ENCODE measurements at regions of chr16 and their contacts with region 1.

Region 1: DNA sequence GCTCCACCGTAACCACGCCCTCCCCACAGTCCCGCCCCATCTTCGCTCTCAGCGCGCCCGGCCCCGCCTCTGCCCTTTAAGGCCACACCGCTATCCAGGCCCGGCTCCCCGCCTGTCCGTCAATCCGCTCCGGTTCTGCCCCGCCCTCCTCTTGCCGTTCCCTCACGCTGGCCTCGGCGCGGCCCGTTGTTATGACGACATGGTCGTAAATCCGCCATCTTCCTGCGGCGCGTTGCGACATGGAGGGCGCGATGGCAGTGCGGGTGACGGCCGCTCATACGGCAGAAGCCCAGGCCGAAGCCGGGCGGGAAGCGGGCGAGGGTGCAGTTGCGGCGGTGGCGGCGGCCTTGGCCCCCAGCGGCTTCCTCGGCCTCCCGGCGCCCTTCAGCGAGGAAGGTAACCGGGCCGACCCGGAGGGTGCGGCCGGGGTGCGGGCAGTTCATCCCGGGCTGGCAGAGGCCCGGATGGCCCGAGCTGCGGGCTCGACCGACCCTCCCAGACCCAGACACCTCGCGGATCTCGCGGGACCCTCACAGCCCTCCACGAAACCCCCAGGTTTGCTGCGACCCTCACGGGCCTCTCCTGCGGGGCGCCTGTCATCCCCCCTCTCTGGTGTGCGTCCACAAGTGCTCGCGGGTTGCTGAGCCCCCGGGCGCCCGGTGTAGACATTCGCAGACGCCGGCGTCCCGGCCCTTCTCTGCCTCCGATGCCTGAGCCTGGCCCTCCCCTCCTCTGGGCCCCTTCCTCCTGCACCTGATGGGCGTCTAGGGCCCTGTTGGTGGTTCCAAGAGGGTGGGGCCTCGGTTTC is at the start of gene E4F1:
- DNase-seq: peak; percentile 100
- ATAC-seq: peak; percentile 99
- H3K4me3 Mint-ChIP-seq: peak within 1 kb of the TSS; percentile 78
- H3K27ac Mint-ChIP-seq: peak within 1 kb of the TSS; percentile 13
- H3K4me1 Mint-ChIP-seq: peaks cover 15% of the 10 kb centered on the region
- H3K27me3 Mint-ChIP-seq: no peaks in the 10 kb centered on the region
- total RNA-seq, gene E4F1: 18.0 to 18.6 TPM

Region 2: DNA sequence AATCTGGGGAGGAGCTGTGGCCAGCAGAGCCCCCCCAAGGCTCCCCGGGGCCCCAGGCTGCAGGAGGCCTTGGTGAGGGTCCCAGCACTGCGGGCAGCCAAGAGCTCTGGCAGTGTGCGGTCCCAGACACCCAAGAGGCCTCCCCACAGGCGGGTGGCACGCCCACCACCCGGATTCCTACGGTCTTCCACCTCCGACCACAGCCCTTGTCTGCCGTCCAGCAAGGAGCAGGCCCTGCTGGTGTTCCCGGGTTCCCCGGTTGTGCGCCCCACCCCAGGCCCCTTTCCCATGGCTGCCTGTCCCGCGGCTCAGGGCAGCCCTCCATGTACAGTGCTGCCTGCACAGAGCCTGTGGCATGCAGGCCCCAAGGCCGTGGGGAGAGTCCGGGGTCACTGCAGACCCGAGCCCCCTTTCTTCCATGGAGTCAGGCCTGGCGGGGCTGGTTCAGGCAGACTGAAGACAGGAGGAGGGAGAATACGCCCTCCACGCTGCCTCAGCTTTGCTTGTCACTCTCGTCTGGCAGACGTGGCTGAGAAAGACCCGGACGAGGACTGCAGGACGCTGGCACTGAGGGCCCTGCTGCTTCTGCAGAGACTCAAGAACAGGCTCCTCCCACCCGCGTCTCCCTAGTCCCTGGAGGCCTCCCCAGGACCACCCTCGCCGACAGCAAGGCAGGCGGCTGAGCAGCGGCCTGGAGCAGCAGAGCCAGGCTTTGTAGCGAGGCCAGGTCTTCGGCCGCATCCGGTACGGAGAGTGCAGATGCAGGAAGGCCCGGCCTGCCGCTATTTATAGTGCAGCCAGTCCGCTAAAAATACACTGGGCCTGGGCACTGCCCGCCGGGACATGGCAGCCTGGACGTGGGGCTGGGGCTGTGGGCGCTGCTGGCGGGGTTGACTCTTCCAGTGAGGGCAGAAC is 714.0 kb before region 1 on chr16:
- CTCF ChIA-PET with region 1: no interaction called
- POLR2A ChIA-PET with region 1: no interaction called
- intact Hi-C with region 1: no loop called
- DNase-seq: no peak
- ATAC-seq: no peak
- H3K4me3 Mint-ChIP-seq: no peak overlapping the region
- H3K27ac Mint-ChIP-seq: no peak overlapping the region
- H3K4me1 Mint-ChIP-seq: no peaks in the 10 kb centered on the region
- H3K27me3 Mint-ChIP-seq: no peaks in the 10 kb centered on the region

Region 3: DNA sequence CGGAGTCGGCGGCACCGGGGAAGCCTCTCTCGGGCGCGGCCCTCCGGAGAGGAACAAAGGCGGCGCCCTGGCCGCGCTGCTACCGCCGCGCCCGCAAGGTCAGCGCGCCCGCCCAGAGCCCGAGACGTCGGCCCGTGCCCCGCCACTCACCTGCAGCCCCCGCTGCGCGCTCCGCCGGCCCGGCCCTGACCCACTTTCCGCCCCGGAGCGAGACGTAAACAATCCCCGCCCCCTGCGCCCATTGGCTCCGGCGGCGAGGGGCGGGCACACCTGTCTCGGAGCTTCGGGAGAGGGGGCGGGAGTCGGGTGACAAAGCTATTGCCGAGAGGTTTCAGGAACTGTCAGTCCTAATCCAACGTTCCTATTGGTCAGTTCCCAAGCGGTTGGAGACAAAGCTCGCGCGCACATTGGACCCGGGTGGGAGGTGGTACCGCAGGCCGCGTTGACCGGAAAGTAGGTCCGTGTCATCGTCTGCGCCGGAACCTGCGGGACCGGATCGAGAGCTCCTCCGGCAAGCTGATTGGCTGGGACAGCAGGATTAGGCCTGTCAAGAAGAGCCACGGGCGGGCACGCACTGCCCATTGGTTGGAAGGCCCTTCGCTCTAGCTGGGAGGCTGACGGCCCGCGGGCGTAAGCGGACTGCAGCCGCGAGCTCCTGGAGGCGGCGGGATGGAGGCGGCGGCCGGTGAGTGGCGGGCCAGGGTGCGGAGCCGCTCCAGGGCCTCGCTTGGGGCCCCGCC is 441.1 kb before region 1 on chr16 and contains the starts of genes NUBP2 and SPSB3:
- CTCF ChIA-PET with region 1: no interaction called
- POLR2A ChIA-PET with region 1: no interaction called
- intact Hi-C with region 1: loop called in 1 of 2 experiments (anchors 1 kb)
- DNase-seq: peak; percentile 99
- ATAC-seq: peak; percentile 93
- H3K4me3 Mint-ChIP-seq: peak within 1 kb of the TSS; percentile 94
- H3K27ac Mint-ChIP-seq: peak within 1 kb of the TSS; percentile 85
- H3K4me1 Mint-ChIP-seq: peaks cover 26% of the 10 kb centered on the region
- H3K27me3 Mint-ChIP-seq: no peaks in the 10 kb centered on the region
- total RNA-seq, gene NUBP2: 34.4 to 42.4 TPM
- total RNA-seq, gene SPSB3: 12.5 to 13.6 TPM

Region 4: GRCh38 chr16:1991948-1992703 is 231.5 kb before region 1 on chr16:
- CTCF ChIA-PET with region 1: no interaction called
- POLR2A ChIA-PET with region 1: no interaction called
- intact Hi-C with region 1: loop called in 1 of 2 experiments (anchors 1 kb)
- DNase-seq: peak; percentile 100
- ATAC-seq: peak; percentile 70
- H3K4me3 Mint-ChIP-seq: peak overlapping the region; percentile 56
- H3K27ac Mint-ChIP-seq: no peak overlapping the region
- H3K4me1 Mint-ChIP-seq: peaks cover 27% of the 10 kb centered on the region
- H3K27me3 Mint-ChIP-seq: peaks cover 15% of the 10 kb centered on the region

Region 5: DNA sequence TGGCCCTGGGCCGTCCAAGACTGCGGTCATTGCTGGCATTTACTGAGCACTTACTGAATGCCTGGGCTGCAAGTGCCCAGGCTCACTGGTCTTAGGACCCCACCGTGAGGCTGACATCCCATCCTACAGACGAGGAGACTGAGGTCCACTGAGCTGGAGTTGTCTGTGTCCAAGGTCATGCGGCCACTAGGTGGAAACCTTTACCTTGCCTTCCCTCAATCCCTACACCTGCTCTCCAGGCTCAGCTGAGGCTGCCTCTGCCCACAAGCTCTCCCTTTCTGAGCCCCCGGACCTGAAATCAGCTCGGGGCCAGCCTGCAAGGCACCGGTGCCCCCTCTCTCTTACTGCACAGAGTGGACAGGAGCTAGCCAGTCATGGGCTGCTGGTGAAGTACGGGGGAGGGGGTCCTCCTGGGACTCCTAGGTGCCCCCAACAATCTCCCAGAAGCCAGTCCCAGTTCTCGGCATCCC is 28.7 kb before region 1 on chr16:
- CTCF ChIA-PET with region 1: interaction called, 3 read pairs
- POLR2A ChIA-PET with region 1: no interaction called
- intact Hi-C with region 1: loop called in 1 of 2 experiments (anchors 1 kb)
- DNase-seq: peak; percentile 74
- ATAC-seq: peak; percentile 87
- H3K4me3 Mint-ChIP-seq: peak overlapping the region; percentile 26
- H3K27ac Mint-ChIP-seq: no peak overlapping the region
- H3K4me1 Mint-ChIP-seq: peaks cover 5% of the 10 kb centered on the region
- H3K27me3 Mint-ChIP-seq: peaks cover 23% of the 10 kb centered on the region

Region 6: GRCh38 chr16:2251483-2252240 is 28.1 kb after region 1 on chr16 and contains the start of gene ECI1:
- CTCF ChIA-PET with region 1: interaction called, 3 read pairs
- POLR2A ChIA-PET with region 1: interaction called, 3 read pairs
- intact Hi-C with region 1: loop called (anchors 1 kb)
- DNase-seq: peak; percentile 92
- ATAC-seq: peak; percentile 87
- H3K4me3 Mint-ChIP-seq: peak within 1 kb of the TSS; percentile 90
- H3K27ac Mint-ChIP-seq: peak within 1 kb of the TSS; percentile 90
- H3K4me1 Mint-ChIP-seq: peaks cover 5% of the 10 kb centered on the region
- H3K27me3 Mint-ChIP-seq: no peaks in the 10 kb centered on the region
- total RNA-seq, gene ECI1: 23.0 to 41.0 TPM